Activated CD8-positive, alpha-beta memory T cell treated with anti-CD3 and anti-CD28 coated beads, Interleukin-2, amount 10 ng/mL, durations not matched to agents 7 days and 5 days (primary cell): ENCODE measurements at regions of chr12 and their contacts with region 1.

Region 1: GRCh38 chr12:751192-751998 is 984 bp upstream of the WNK1 start:
- DNase-seq: peak; percentile 97
- ATAC-seq: peak; percentile 61
- H3K4me3 Mint-ChIP-seq: no peak overlapping the region
- H3K27ac Mint-ChIP-seq: no peak overlapping the region
- H3K4me1 Mint-ChIP-seq: peaks cover 18% of the 10 kb centered on the region
- H3K27me3 Mint-ChIP-seq: no peaks in the 10 kb centered on the region

Region 2: DNA sequence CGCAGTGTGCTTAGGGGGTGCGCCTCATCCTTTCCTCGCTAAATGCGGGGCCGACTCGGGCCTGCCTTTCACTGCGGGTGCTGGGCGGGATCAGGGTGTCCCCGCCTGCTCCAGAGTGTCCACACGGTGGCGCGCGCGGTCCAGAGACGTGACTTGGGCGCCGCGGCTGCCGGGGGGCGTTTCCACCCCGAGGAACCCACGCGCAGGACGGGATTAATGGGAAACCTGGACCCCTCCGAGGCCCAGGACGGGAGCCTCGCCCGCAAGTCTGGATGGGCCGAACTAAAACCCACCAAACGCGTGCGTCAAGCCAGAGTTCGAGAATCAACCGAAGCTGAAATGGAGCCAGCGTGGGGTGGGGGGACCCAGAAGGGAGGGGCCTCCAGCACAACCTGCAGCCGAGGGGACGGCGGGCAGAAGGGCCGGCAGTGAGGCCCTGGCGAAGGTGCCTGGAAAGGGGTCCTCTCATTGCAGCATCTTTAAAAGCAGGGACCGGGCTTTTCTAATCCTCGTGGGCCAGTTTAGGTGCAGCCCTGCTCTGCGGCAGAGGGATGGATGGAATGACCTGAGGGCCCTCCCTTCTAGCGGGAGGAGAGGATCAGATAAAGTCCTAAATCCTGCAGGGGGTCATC is 181.5 kb before region 1 on chr12:
- CTCF ChIA-PET with region 1: interaction called, 99 read pairs
- DNase-seq: peak; percentile 90
- ATAC-seq: peak; percentile 91
- H3K4me3 Mint-ChIP-seq: peak overlapping the region; percentile 75
- H3K27ac Mint-ChIP-seq: peak overlapping the region; percentile 51
- H3K4me1 Mint-ChIP-seq: peaks cover 49% of the 10 kb centered on the region
- H3K27me3 Mint-ChIP-seq: no peaks in the 10 kb centered on the region

Region 3: DNA sequence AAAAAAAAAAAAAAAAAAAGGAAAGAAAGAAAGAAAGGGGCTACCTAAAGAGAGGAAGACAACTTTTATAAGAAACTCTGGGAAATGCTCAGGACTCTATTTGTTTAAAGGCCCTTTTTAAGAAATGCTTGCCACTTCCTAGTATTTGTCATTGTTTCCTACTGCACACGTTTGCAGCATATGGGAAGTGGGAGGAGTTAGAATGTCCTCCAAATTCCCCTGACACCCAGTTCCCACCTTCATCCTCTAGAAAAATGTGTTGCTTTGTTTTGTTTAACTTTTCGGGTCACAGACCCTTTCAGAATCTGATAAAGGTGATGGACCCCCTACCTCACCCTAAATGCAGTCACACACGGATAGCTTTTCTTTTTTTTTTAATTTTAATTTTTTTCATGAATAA is 129.0 kb before region 1 on chr12:
- CTCF ChIA-PET with region 1: interaction called, 25 read pairs
- DNase-seq: no peak
- ATAC-seq: peak; percentile 74
- H3K4me3 Mint-ChIP-seq: no peak overlapping the region
- H3K27ac Mint-ChIP-seq: peak overlapping the region; percentile 81
- H3K4me1 Mint-ChIP-seq: peaks cover 43% of the 10 kb centered on the region
- H3K27me3 Mint-ChIP-seq: no peaks in the 10 kb centered on the region

Region 4: GRCh38 chr12:666766-667308 is 84.6 kb before region 1 on chr12:
- CTCF ChIA-PET with region 1: interaction called, 61 read pairs
- DNase-seq: peak; percentile 71
- ATAC-seq: peak; percentile 79
- H3K4me3 Mint-ChIP-seq: peak overlapping the region; percentile 47
- H3K27ac Mint-ChIP-seq: peak overlapping the region; percentile 82
- H3K4me1 Mint-ChIP-seq: peaks cover 57% of the 10 kb centered on the region
- H3K27me3 Mint-ChIP-seq: peaks cover 6% of the 10 kb centered on the region

Region 5: DNA sequence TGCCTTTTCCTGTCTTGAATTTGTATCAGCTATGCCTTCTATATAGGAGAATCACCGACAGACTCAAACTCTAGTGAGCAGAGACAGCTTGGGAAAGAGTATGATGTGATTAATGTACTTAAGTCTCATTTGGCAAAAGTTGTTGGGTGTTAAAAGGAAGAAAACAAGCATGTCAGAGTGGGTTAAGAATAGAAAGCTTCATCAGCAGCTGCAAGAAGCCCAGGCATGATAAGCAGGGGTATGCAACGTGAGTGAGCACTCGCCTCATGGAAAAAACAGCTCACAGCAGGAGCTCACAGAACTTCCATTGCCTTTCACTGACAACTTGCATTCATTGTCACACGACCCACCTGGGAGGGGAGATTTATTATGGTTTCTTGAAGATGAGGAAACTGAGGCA is 34.9 kb before region 1 on chr12:
- CTCF ChIA-PET with region 1: interaction called, 10 read pairs
- DNase-seq: no peak
- ATAC-seq: peak; percentile 53
- H3K4me3 Mint-ChIP-seq: no peak overlapping the region
- H3K27ac Mint-ChIP-seq: no peak overlapping the region
- H3K4me1 Mint-ChIP-seq: peaks cover 31% of the 10 kb centered on the region
- H3K27me3 Mint-ChIP-seq: peaks cover 3% of the 10 kb centered on the region

Region 6: DNA sequence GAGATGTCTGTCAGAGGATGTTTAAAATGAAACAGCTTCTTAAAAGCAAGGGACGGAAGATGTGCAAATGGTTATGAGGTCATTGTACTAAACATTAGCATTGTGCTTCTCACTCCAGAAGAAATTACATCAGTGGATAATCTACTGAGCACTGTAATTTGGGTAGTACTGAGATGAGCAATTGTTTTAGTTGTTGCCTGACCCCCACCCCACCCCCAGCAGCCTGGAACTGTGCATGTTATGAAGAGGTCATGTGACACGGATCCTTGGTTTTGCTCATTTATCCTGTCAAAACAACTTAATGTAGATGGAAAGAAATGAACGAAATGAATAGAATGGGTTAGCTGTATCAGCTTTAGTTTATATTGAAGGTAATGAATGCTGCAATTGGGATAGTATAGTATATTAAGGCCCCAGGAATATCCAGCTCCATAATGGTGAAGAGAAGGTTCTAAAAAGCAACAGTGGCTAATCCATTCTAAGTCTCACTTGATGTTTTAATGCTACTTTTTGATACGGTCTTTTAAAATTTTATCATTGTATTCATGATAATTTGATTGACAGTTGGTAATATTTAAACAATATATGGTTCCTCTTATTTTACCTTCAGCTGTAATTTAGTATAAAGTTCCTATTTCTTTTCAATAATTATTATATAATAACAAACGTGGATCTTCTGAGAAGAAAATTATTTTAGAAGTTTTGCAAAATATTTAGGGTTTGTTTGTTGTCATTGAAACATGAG is 59.4 kb after region 1 on chr12:
- CTCF ChIA-PET with region 1: interaction called, 54 read pairs
- DNase-seq: peak; percentile 75
- ATAC-seq: peak; percentile 85
- H3K4me3 Mint-ChIP-seq: peak overlapping the region; percentile 36
- H3K27ac Mint-ChIP-seq: peak overlapping the region; percentile 59
- H3K4me1 Mint-ChIP-seq: peaks cover 70% of the 10 kb centered on the region
- H3K27me3 Mint-ChIP-seq: no peaks in the 10 kb centered on the region